ENCODE measurements at regions of chr6 and their contacts with region 1.

Region 1: GRCh38 chr6:291697-292505 is at the start of gene DUSP22:
- DNase-seq: peak; percentile 79 to 90
- ATAC-seq: peak; percentile 66 to 74 (median 67)
- H3K4me3 ChIP-seq: peak within 1 kb of the TSS; percentile 52
- H3K4me3 Mint-ChIP-seq: peak within 1 kb of the TSS; percentile 92
- H3K27ac ChIP-seq: peak within 1 kb of the TSS; percentile 98
- H3K27ac Mint-ChIP-seq: peak within 1 kb of the TSS; percentile 92
- H3K4me1 ChIP-seq: peaks cover 49% of the 10 kb centered on the region
- H3K4me1 Mint-ChIP-seq: peaks cover 43 to 51% of the 10 kb centered on the region in 2 donors
- H3K27me3 ChIP-seq: no peaks in the 10 kb centered on the region
- H3K27me3 Mint-ChIP-seq: peaks cover 0 to 2% of the 10 kb centered on the region in 2 donors
- CTCF ChIP-seq: no peak
- total RNA-seq, gene DUSP22: 50.4 to 61.5 (median 56.6) TPM

Region 2: DNA sequence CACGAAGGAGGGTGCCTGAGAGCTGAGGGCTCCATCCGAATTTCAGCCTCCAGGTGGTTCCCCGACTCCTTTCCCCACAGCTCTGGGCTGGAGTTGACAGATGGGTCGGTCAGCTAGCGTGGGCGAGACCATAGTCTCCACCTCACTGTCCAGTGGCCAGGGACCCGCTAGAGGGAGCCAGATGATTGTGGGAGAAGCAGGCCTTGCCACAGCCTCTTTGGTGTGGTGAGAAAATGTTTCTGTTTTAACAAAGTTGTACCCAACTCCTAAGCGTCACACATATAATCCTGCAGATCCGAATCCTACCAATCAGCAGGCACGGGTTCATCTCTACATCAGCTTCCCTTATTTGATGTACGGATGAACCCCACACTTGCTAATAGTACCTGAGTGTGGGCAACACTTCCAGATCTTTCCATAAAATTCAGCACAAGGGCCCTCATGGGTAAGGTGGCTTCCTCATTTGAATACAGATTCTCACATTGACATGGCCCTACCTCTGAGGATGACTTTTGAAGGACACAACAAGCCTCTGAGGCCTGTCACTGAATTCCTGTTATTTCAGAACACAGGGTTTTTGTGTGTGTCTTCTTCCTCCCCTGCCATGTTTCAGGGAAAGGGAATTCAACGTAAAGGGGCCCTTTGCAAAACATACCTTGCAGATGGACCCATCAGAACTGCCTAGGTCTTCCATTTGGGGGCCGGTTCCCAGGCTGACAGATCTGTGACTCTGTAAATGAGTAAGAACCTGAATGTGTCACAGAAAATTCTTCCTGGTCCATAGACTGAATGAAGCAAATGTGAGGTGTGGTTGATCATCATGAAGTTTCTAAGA is 102.9 kb before region 1 on chr6:
- intact Hi-C with region 1: loop called (anchors 5 kb)
- DNase-seq: peak; percentile 69 to 86
- ATAC-seq: peak; percentile 85 to 97 (median 89)
- H3K4me3 ChIP-seq: no peak overlapping the region
- H3K4me3 Mint-ChIP-seq: no peak overlapping the region
- H3K27ac ChIP-seq: no peak overlapping the region
- H3K27ac Mint-ChIP-seq: no peak overlapping the region
- H3K4me1 ChIP-seq: peaks cover 17% of the 10 kb centered on the region
- H3K4me1 Mint-ChIP-seq: peaks cover 4 to 28% of the 10 kb centered on the region in 2 donors
- H3K27me3 ChIP-seq: no peaks in the 10 kb centered on the region
- H3K27me3 Mint-ChIP-seq: no peaks in the 10 kb centered on the region
- CTCF ChIP-seq: peak; percentile 79

Region 3: GRCh38 chr6:217048-217659 is 74.7 kb before region 1 on chr6:
- intact Hi-C with region 1: loop called (anchors 5 kb)
- DNase-seq: peak in 1 of 2 donors; percentile 51
- ATAC-seq: no peak
- H3K4me3 ChIP-seq: no peak overlapping the region
- H3K4me3 Mint-ChIP-seq: no peak overlapping the region
- H3K27ac ChIP-seq: no peak overlapping the region
- H3K27ac Mint-ChIP-seq: peak overlapping the region in 1 of 2 donors; percentile 7
- H3K4me1 ChIP-seq: peaks cover 38% of the 10 kb centered on the region
- H3K4me1 Mint-ChIP-seq: peaks cover 12 to 17% of the 10 kb centered on the region in 2 donors
- H3K27me3 ChIP-seq: no peaks in the 10 kb centered on the region
- H3K27me3 Mint-ChIP-seq: peaks cover 3 to 16% of the 10 kb centered on the region in 2 donors
- CTCF ChIP-seq: peak; percentile 18

Region 4: DNA sequence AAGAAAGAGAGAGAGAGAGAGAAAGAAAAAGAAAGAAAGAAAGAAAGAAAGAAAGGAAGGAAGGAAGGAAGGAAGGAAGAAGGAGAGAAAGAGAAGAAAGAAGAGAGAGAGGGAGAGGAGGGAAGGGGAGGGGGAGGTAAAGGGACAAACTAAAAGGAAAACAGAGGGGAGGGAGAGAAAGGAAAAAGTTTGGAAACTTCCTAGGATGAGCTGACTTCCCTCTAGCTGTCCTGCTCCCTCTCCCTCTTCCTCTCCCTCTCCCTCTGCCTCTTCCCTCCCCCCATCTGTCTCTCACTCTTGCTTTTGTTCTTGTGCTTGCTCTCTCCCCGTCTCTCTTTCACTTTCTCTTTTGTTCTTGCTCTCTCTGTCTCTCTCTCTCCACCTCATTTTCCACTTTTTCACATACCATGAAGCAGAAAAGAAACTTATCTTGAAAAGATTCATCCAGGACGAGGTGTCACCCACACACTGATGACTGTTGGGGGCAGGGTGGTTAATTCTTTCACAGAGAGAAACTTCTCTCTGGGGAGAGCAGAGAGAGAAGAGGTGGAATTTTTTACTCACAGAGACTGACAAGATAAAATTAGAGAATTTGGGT is 56.0 kb before region 1 on chr6:
- intact Hi-C with region 1: loop called (anchors 1 kb)
- DNase-seq: peak in 1 of 2 donors; percentile 81
- ATAC-seq: peak; percentile 84 to 92 (median 91)
- H3K4me3 ChIP-seq: peak overlapping the region; percentile 4
- H3K4me3 Mint-ChIP-seq: peak overlapping the region; percentile 77
- H3K27ac ChIP-seq: peak overlapping the region; percentile 85
- H3K27ac Mint-ChIP-seq: peak overlapping the region; percentile 73 to 86
- H3K4me1 ChIP-seq: peaks cover 23% of the 10 kb centered on the region
- H3K4me1 Mint-ChIP-seq: peaks cover 23 to 24% of the 10 kb centered on the region in 2 donors
- H3K27me3 ChIP-seq: no peaks in the 10 kb centered on the region
- H3K27me3 Mint-ChIP-seq: no peaks in the 10 kb centered on the region
- CTCF ChIP-seq: no peak

Region 5: DNA sequence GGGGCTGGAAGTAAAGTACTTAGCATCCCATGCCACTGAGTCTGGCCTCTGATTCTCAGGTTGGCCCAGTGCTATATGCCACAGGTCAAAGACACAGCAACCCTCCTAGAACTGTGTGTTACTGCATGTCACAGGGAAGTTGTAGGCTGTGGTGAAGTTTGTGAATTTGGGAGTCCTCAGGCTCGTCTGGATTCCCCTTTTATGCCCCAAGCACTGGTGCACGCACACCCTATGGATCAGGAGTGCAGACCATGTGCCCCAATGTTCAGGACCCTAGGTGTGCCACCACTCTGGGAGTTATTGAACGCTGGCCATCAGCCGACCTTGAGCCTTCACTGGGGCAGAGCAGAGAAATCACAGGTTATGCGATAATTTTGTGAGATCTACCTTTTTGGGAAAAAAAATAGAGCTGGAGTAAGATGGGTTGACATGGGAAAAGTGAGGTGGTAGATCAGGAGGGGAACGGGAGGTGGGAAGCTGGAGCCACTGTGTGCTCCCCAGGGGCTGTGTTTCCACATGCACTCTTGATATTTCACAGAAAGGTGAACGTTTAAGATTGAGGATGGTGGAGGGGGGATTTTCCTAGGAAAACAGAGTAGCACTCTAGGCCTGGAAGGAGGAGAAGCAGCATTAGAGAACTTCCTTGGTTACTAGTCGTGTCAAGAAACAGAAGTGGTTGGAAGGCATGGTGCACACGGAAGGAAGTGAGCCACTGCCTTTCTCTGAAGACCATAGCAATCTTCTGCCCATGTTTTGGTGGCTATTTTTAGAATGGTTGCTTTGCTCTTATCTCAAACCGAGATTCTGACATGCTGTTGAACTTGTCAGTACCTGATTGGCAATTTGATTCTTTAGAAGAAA is 44.5 kb after region 1 on chr6:
- intact Hi-C with region 1: loop called (anchors 1 kb)
- DNase-seq: peak in 1 of 2 donors; percentile 38
- ATAC-seq: peak; percentile 22 to 45 (median 43)
- H3K4me3 ChIP-seq: no peak overlapping the region
- H3K4me3 Mint-ChIP-seq: no peak overlapping the region
- H3K27ac ChIP-seq: peak overlapping the region; percentile 35
- H3K27ac Mint-ChIP-seq: peak overlapping the region; percentile 23 to 34
- H3K4me1 ChIP-seq: peaks cover 61% of the 10 kb centered on the region
- H3K4me1 Mint-ChIP-seq: peaks cover 51 to 56% of the 10 kb centered on the region in 2 donors
- H3K27me3 ChIP-seq: no peaks in the 10 kb centered on the region
- H3K27me3 Mint-ChIP-seq: no peaks in the 10 kb centered on the region
- CTCF ChIP-seq: no peak

Region 6: GRCh38 chr6:422433-423054 is 130.6 kb after region 1 on chr6:
- intact Hi-C with region 1: loop called (anchors 5 kb)
- DNase-seq: peak; percentile 44 to 55
- ATAC-seq: peak; percentile 87 to 100 (median 96)
- H3K4me3 ChIP-seq: no peak overlapping the region
- H3K4me3 Mint-ChIP-seq: no peak overlapping the region
- H3K27ac ChIP-seq: no peak overlapping the region
- H3K27ac Mint-ChIP-seq: peak overlapping the region in 1 of 2 donors; percentile 79
- H3K4me1 ChIP-seq: peaks cover 23% of the 10 kb centered on the region
- H3K4me1 Mint-ChIP-seq: peaks cover 14 to 19% of the 10 kb centered on the region in 2 donors
- H3K27me3 ChIP-seq: no peaks in the 10 kb centered on the region
- H3K27me3 Mint-ChIP-seq: peaks cover 0 to 4% of the 10 kb centered on the region in 2 donors
- CTCF ChIP-seq: no peak

Region 7: DNA sequence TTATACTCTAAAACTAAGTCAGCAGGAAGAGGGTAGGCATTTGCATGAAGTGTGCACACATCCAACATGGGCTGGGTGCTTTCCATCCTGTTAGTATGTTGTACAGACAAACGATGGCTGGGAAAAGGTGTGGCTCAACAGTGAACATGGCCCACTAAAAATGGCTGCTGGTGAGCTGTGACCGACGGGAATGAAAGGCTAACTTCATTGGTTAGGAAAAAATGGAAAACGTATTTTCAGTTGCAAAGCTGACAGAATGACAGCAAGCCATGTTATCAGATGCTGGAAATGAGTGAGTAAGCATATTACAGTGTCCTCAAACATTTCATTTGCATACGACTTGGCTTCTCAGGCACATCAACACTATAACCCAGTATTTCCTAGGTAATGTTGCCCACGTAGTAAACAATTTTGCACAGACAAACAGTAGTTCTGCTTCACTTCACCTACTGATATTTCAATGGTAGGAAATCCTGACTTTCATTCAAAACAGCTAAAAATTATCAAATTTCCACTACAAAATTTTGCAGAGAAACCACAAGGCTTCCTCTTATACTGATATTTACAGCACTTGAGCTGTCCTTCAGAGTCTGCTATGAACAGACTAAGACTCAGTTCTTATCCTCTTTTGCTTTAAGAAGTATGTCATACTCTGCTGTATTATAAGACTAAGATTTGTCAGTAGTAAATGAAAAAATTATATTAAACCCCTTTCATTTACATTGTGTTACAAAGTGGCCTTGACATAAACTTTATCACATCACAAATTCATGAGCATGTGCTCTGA is 198.5 kb after region 1 on chr6:
- intact Hi-C with region 1: loop called (anchors 5 kb)
- DNase-seq: peak in 1 of 2 donors; percentile 39
- ATAC-seq: peak; percentile 56 to 57 (median 57)
- H3K4me3 ChIP-seq: no peak overlapping the region
- H3K4me3 Mint-ChIP-seq: peak overlapping the region; percentile 67
- H3K27ac ChIP-seq: peak overlapping the region; percentile 45
- H3K27ac Mint-ChIP-seq: peak overlapping the region; percentile 87 to 92
- H3K4me1 ChIP-seq: peaks cover 27% of the 10 kb centered on the region
- H3K4me1 Mint-ChIP-seq: peaks cover 57 to 58% of the 10 kb centered on the region in 2 donors
- H3K27me3 ChIP-seq: no peaks in the 10 kb centered on the region
- H3K27me3 Mint-ChIP-seq: no peaks in the 10 kb centered on the region
- CTCF ChIP-seq: no peak

Measured in natural killer cell (primary cell).